ENCODE measurements at regions of chr17 and their contacts with region 1.

Region 1: GRCh38 chr17:75738218-75738802 is 17.1 kb downstream of the ITGB4 start:
- DNase-seq: no peak
- H3K4me3 ChIP-seq: no peak overlapping the region
- H3K27ac ChIP-seq: no peak overlapping the region
- H3K4me1 ChIP-seq: no peaks in the 10 kb centered on the region
- H3K27me3 ChIP-seq: no peaks in the 10 kb centered on the region
- CTCF ChIP-seq: no peak
- EP300 ChIP-seq: no peak
- POLR2A ChIP-seq: no peak

Region 2: DNA sequence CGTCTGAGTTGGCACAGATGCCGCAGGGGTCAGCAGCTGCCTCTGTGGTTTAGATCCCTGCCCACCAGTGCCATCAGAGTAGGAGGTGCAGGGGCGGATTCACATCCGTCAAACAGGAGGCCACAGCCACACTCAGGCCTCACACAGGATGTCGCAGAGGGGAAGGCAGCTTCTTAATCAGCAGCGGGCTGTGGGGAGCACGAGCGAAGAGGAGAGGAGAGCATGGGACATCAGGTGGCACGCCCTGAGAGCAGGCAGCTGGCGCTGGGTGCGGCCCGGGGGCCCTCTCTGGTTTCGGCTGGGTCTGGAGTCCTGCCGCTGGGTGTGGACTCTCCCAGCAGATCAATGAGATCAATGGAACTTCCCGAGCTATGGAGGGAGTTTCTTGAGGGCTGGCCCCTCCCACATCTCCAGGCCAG is 203.2 kb before region 1 on chr17:
- intact Hi-C with region 1: no loop called
- DNase-seq: no peak
- H3K4me3 ChIP-seq: no peak overlapping the region
- H3K27ac ChIP-seq: no peak overlapping the region
- H3K4me1 ChIP-seq: no peaks in the 10 kb centered on the region
- H3K27me3 ChIP-seq: no peaks in the 10 kb centered on the region
- CTCF ChIP-seq: no peak
- EP300 ChIP-seq: no peak
- POLR2A ChIP-seq: no peak

Region 3: GRCh38 chr17:75679706-75680442 is 58.4 kb before region 1 on chr17:
- intact Hi-C with region 1: loop called in 1 of 4 experiments (anchors 5 kb)
- DNase-seq: no peak
- H3K4me3 ChIP-seq: no peak overlapping the region
- H3K27ac ChIP-seq: no peak overlapping the region
- H3K4me1 ChIP-seq: no peaks in the 10 kb centered on the region
- H3K27me3 ChIP-seq: no peaks in the 10 kb centered on the region
- CTCF ChIP-seq: no peak
- EP300 ChIP-seq: no peak
- POLR2A ChIP-seq: no peak

Region 4: GRCh38 chr17:75693500-75694481 is 44.5 kb before region 1 on chr17:
- intact Hi-C with region 1: loop called in 1 of 4 experiments (anchors 5 kb)
- DNase-seq: no peak
- H3K4me3 ChIP-seq: no peak overlapping the region
- H3K27ac ChIP-seq: no peak overlapping the region
- H3K4me1 ChIP-seq: no peaks in the 10 kb centered on the region
- H3K27me3 ChIP-seq: no peaks in the 10 kb centered on the region
- CTCF ChIP-seq: no peak
- EP300 ChIP-seq: no peak
- POLR2A ChIP-seq: no peak